ENCODE measurements at regions of chr12 and their contacts with region 1.

Region 1: GRCh38 chr12:42589465-42590329 is at the start of gene PRICKLE1:
- DNase-seq: peak in 1 of 2 experiments; percentile 60
- H3K4me3 ChIP-seq: peak within 1 kb of the TSS; percentile 74
- H3K4me1 ChIP-seq: peaks cover 41% of the 10 kb centered on the region
- H3K27me3 ChIP-seq: no peaks in the 10 kb centered on the region

Region 2: GRCh38 chr12:43282106-43282505 is 692.4 kb after region 1 on chr12:
- in situ Hi-C with region 1: loop called (anchors 25 kb)
- DNase-seq: peak in 1 of 2 experiments; percentile 67
- H3K4me3 ChIP-seq: no peak overlapping the region
- H3K4me1 ChIP-seq: peaks cover 14% of the 10 kb centered on the region; the same call in 1 of the 2 replicates
- H3K27me3 ChIP-seq: no peaks in the 10 kb centered on the region

Region 3: GRCh38 chr12:44076871-44077270 is 1487.2 kb after region 1 on chr12:
- in situ Hi-C with region 1: no loop called
- DNase-seq: no peak
- H3K4me3 ChIP-seq: no peak overlapping the region
- H3K4me1 ChIP-seq: peaks cover 7% of the 10 kb centered on the region
- H3K27me3 ChIP-seq: no peaks in the 10 kb centered on the region